PC-3 (cell line): ENCODE measurements at regions of chr4 and their contacts with region 1.

Region 1: DNA sequence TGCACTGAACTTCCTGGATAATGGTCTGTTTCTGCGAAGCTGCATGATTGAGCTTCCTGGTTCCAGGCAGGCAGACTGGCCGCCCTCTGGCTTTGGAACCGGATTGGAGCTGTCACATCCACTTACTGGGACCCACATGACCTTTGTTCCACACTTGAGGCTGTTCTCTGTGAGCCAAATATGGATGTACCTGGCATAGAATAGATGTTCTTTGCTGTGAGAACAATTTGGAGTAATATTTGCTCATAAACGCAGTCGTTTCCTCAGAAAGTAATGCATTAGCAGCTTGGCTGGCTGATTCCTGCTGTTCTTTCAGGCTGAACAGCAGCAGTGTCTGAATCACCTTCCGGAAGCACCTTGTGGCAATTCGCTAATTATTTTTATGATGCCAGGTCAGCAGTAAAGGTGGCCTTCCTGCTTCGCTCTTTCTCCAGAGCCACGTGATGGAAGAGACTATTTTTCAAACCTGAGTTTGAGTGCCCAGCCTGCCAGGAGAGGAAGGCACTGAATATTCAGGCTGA is 78.1 kb upstream of the BOD1L1 start:
- DNase-seq: peak; percentile 64
- ATAC-seq: peak; percentile 65
- H3K4me3 ChIP-seq: 0 out of 2 replicates have a peak overlapping the region, but pooled peaks have one; percentile 17
- H3K27ac ChIP-seq: peak overlapping the region; percentile 75
- H3K4me1 ChIP-seq: peaks cover 44% of the 10 kb centered on the region
- H3K27me3 ChIP-seq: no peaks in the 10 kb centered on the region
- CTCF ChIP-seq: no peak

Region 2: DNA sequence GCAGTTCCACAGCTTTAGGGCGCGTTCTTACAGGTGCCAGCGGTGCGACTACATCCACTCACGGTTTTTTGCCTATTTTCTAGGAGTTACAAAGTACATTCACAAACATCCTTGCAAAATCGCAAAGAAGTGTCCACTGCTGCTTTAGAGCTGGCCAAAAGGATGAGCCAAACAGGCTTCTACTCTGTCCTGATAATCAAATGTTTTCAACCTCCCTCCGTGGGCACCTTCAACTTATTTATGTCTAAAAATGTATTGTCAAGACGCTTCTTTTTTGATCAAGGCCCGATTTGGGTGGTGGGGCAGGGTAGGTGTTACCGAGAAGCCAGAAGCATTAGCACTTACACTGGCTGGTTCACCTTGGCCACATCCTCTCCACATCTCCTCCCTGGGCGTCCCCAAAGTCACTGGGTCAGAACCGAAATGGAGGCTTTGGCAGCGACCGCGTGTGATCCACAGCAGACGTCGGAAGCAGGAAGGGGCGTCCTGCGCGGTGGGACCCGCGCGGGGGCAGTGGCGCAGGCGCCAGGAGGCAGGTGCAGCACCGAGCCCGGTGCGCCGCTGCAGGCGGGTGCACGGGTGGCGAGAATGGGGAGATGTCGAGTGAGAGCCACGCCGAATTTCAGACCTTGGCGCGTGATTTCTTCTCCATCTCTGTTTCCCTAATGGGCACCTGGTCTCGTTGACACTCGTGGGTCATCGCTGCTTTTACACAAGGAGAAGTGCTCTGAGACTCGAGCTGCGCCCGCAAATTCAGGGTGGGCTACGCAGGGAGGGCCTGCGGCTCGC is 178.2 kb before region 1 on chr4:
- CTCF ChIA-PET with region 1: no interaction called
- POLR2A ChIA-PET with region 1: no interaction called
- intact Hi-C with region 1: no loop called
- DNase-seq: no peak
- ATAC-seq: no peak
- H3K4me3 ChIP-seq: no peak overlapping the region
- H3K27ac ChIP-seq: no peak overlapping the region
- H3K4me1 ChIP-seq: no peaks in the 10 kb centered on the region
- H3K27me3 ChIP-seq: peaks cover 36% of the 10 kb centered on the region
- CTCF ChIP-seq: no peak

Region 3: GRCh38 chr4:13627606-13628301 is 77.8 kb before region 1 on chr4 and contains the start of gene BOD1L1:
- CTCF ChIA-PET with region 1: no interaction called
- POLR2A ChIA-PET with region 1: interaction called, 16 read pairs
- intact Hi-C with region 1: no loop called
- DNase-seq: peak; percentile 87
- ATAC-seq: peak; percentile 88
- H3K4me3 ChIP-seq: peak within 1 kb of the TSS; percentile 97
- H3K27ac ChIP-seq: peak within 1 kb of the TSS; percentile 79
- H3K4me1 ChIP-seq: peaks cover 15% of the 10 kb centered on the region
- H3K27me3 ChIP-seq: no peaks in the 10 kb centered on the region
- CTCF ChIP-seq: peak; percentile 41
- total RNA-seq, gene BOD1L1: 22.0 and 27.2 TPM in 2 replicates

Region 4: GRCh38 chr4:13849778-13850177 is 144.2 kb after region 1 on chr4:
- CTCF ChIA-PET with region 1: no interaction called
- POLR2A ChIA-PET with region 1: no interaction called
- intact Hi-C with region 1: loop called (anchors 10 kb)
- DNase-seq: no peak
- ATAC-seq: no peak
- H3K4me3 ChIP-seq: no peak overlapping the region
- H3K27ac ChIP-seq: no peak overlapping the region
- H3K4me1 ChIP-seq: no peaks in the 10 kb centered on the region
- H3K27me3 ChIP-seq: no peaks in the 10 kb centered on the region
- CTCF ChIP-seq: no peak

Region 5: GRCh38 chr4:13920901-13921300 is 215.3 kb after region 1 on chr4:
- CTCF ChIA-PET with region 1: no interaction called
- POLR2A ChIA-PET with region 1: no interaction called
- intact Hi-C with region 1: loop called (anchors 2 kb)
- DNase-seq: peak; percentile 97
- ATAC-seq: peak; percentile 97
- H3K4me3 ChIP-seq: no peak overlapping the region
- H3K27ac ChIP-seq: peak overlapping the region; percentile 93
- H3K4me1 ChIP-seq: peaks cover 23% of the 10 kb centered on the region
- H3K27me3 ChIP-seq: no peaks in the 10 kb centered on the region
- CTCF ChIP-seq: no peak

Region 6: GRCh38 chr4:13966231-13967195 is 260.9 kb after region 1 on chr4:
- CTCF ChIA-PET with region 1: no interaction called
- POLR2A ChIA-PET with region 1: no interaction called
- intact Hi-C with region 1: loop called (anchors 5 kb)
- DNase-seq: peak; percentile 72
- ATAC-seq: peak; percentile 92
- H3K4me3 ChIP-seq: no peak overlapping the region
- H3K27ac ChIP-seq: peak overlapping the region; percentile 54
- H3K4me1 ChIP-seq: peaks cover 26% of the 10 kb centered on the region
- H3K27me3 ChIP-seq: no peaks in the 10 kb centered on the region
- CTCF ChIP-seq: no peak; the same call in 1 of the 2 replicates

Region 7: GRCh38 chr4:14184265-14184664 is 478.7 kb after region 1 on chr4:
- CTCF ChIA-PET with region 1: no interaction called
- POLR2A ChIA-PET with region 1: no interaction called
- intact Hi-C with region 1: loop called (anchors 5 kb)
- DNase-seq: no peak
- ATAC-seq: no peak
- H3K4me3 ChIP-seq: no peak overlapping the region
- H3K27ac ChIP-seq: no peak overlapping the region
- H3K4me1 ChIP-seq: peaks cover 23% of the 10 kb centered on the region
- H3K27me3 ChIP-seq: no peaks in the 10 kb centered on the region
- CTCF ChIP-seq: no peak